SK-N-SH (cell line): ENCODE measurements at regions of chr16 and their contacts with region 1.

Region 1: DNA sequence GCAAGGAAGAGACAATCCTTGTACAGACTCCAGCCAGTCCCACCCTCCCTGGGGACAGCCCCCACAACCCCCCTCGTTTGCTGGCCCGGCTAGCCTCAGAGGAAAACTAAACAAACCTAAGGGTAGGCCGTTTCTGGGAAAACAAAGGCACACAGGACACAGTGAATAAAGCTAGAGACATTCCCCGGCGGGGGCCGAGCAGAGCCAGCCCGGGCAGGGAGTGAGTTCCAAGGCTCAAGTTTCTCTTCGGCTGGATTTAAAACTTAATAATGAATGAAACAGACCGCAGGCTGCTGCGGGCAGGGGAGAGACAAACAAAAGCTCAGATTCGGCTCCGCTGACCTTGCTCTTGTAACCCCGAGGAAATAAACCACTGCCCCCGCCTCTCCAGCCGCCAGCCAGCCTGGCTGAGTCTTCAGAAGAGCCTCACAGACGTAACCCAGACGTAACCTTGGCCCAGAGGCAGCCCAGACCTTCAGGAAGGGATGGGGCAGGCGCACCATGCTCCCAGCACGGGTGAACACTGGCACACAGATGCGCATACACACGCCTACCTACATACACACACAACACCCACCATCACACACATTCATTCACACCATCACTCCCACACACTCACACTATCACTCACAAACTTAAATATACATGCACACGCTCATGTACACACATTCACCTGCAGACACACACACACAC is 216.0 kb downstream of the ZNF423 start:
- DNase-seq: peak; percentile 81
- H3K4me3 ChIP-seq: no peak overlapping the region; a peak in 1 of 4 replicates
- H3K27ac ChIP-seq: peak overlapping the region; percentile 66 to 85
- H3K4me1 ChIP-seq: peaks cover 29 to 81% of the 10 kb centered on the region in 2 experiments
- H3K27me3 ChIP-seq: no peaks in the 10 kb centered on the region
- CTCF ChIP-seq: no peak
- EP300 ChIP-seq: peak in 1 of 2 experiments; percentile 69; a peak in 2 of 4 replicates
- RAD21 ChIP-seq: peak; percentile 11; the same call in 1 of the 2 replicates

Region 2: DNA sequence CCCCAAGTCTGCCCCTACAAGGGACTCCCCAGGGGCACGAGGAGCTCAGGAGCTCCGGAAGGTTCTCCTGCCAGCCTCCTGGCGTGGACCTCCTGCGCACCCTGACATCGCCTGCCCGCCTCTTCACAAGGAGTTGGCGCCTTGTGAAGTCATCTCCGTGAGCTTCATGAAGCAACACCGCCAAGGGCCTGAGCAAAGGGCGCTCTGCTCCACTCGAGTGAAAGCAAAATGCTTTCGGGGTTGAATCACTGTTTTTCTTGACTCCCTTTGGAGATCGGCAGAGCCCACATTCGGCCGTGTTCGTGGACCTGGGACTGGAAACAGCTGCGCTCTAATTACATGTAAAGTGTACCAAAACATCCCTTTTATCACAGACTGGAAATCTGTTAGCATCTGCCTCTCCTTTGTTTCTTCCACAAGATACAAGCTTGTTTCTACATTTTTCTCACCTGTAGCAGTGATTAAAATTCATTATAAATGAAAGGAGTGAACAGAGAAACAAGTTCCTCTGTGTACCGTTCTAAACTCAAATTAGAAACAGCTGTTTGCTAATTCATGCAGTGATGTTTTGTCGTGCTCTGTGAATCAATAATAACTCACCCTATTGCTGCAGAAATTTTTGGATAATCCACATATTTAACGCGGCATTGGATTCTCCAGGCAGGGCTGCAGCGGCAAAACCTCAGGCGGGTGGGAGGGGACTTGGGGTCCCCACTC is 12.7 kb after region 1 on chr16:
- CTCF ChIA-PET with region 1: interaction called, 6 read pairs
- POLR2A ChIA-PET with region 1: interaction called, 13 read pairs
- DNase-seq: no peak
- H3K4me3 ChIP-seq: peak overlapping the region in 1 of 2 experiments; percentile 51; a peak in 3 of 4 replicates
- H3K27ac ChIP-seq: peak overlapping the region; percentile 52 to 92; a peak in 3 of 4 replicates
- H3K4me1 ChIP-seq: peaks cover 6 to 55% of the 10 kb centered on the region in 2 experiments; a peak in 3 of 4 replicates
- H3K27me3 ChIP-seq: no peaks in the 10 kb centered on the region
- CTCF ChIP-seq: no peak
- EP300 ChIP-seq: no peak
- RAD21 ChIP-seq: no peak